Dorsolateral prefrontal cortex (tissue), 120 donors: ENCODE measurements at regions of chr1 and their contacts with region 1.

Region 1: GRCh38 chr1:162035241-162035640 is 11.6 kb upstream of the OLFML2B start:
- DNase-seq: no peak
- H3K4me3 ChIP-seq: no peak overlapping the region
- H3K27ac ChIP-seq: no peak overlapping the region
- H3K27me3 ChIP-seq: peaks cover 0 to 3% (median 0%) of the 10 kb centered on the region in 45 donors
- CTCF ChIP-seq: no peak

Region 2: DNA sequence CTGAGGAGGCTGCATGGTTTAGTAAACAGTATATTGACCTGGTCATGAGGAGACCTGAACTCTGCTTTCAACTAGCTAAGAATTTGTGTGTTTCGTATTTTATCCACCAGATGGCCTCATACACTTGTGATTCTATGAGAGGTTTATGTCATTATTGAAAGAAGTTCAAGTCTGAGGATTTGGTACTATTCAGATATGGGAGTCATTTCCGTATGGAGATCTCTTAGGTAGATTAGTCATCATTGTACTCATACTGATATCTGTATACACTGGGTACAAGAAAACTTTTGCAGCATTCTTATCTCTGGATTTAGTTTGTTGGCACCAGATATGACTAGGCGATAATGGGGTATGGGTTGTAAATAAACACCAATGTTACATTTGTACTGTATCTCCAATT is 242.5 kb before region 1 on chr1:
- intact Hi-C with region 1: loop called (anchors 1 to 5 kb)
- DNase-seq: no peak
- H3K4me3 ChIP-seq: no peak overlapping the region
- H3K27ac ChIP-seq: peak overlapping the region in 1 of 59 donors; percentile 8
- H3K27me3 ChIP-seq: no peaks in the 10 kb centered on the region
- CTCF ChIP-seq: peak; percentile 42 to 89 (median 74)

Region 3: GRCh38 chr1:161864577-161864976 is 170.7 kb before region 1 on chr1:
- intact Hi-C with region 1: loop called (anchors 2 to 10 kb)
- DNase-seq: peak in 3 of 10 donors; percentile 14 to 60 (median 39)
- H3K4me3 ChIP-seq: no peak overlapping the region
- H3K27ac ChIP-seq: no peak overlapping the region
- H3K27me3 ChIP-seq: no peaks in the 10 kb centered on the region
- CTCF ChIP-seq: peak in 53 of 56 donors; percentile 19 to 80 (median 51)

Region 4: DNA sequence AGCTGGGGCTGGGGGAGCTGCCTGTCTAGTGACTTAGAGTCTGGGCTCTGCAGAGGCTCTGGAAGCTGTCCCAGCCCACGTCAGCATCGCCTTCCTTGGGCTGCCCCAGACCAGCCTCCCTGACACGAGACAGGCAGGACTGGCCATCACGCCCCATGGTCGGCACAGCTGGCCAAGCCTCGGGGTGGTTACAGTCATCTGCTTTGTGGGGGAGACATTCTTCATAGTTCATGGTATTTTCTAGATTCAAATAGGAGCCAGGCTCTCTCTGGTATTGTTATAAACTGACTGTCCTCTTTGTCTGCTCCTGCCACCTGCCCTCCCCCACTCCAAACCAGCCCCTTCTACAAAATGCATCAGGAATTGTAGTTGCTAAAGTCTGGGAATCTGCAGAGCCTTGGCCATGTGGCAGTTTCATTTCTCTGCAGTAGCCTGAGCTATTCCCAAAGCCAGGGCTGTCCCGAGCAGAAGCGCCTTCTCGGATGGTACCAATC is 41.0 kb before region 1 on chr1:
- intact Hi-C with region 1: loop called in 1 of 2 experiments (anchors 5 kb)
- DNase-seq: peak in 9 of 10 donors; percentile 51 to 77 (median 71)
- H3K4me3 ChIP-seq: peak overlapping the region in 34 of 59 donors; percentile 1 to 54 (median 24)
- H3K27ac ChIP-seq: peak overlapping the region in 58 of 59 donors; percentile 24 to 91 (median 77)
- H3K27me3 ChIP-seq: no peaks in the 10 kb centered on the region
- CTCF ChIP-seq: no peak

Region 5: GRCh38 chr1:162361349-162361748 is 326.1 kb after region 1 on chr1:
- intact Hi-C with region 1: no loop called
- DNase-seq: no peak
- H3K4me3 ChIP-seq: no peak overlapping the region
- H3K27ac ChIP-seq: no peak overlapping the region
- H3K27me3 ChIP-seq: no peaks in the 10 kb centered on the region
- CTCF ChIP-seq: no peak